ENCODE measurements at regions of chr3 and their contacts with region 1.

Region 1: GRCh38 chr3:154310840-154311239 is 13.4 kb downstream of the DHX36 start:
- DNase-seq: no peak
- H3K4me3 ChIP-seq: no peak overlapping the region
- H3K27ac ChIP-seq: no peak overlapping the region
- H3K4me1 ChIP-seq: no peaks in the 10 kb centered on the region
- CTCF ChIP-seq: no peak

Region 2: DNA sequence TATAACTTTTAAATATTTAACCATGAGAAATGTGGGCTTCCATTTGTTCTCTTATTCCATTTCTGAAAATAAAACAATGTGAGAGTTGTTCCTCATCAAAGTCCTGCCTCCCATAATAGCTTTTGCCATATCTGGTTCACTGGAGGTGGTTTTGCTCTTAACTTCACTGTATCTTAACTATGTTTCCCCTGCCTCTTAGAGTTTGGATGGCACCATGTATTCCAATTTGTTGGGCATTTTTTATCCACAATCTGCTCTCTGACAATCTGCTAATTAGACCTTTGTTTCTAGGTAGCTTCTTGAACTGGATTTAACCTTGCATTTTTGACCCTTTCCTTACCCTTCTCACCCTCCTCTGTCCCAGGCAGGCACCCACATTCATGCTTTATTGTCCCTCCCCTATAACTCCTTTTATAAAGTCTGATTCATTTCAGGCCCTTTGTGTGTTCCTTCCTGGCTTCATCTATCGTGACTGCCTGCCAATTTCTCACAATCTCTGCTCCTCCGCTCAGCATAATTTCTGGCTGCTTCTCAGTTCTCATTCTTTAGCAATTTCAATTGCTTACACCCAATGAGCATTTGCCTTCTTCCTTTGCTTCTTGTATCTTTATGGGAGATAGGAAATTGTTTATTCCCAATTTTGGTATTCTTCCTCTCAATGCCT is 333.8 kb before region 1 on chr3:
- CTCF ChIA-PET with region 1: no interaction called
- POLR2A ChIA-PET with region 1: no interaction called
- intact Hi-C with region 1: no loop called
- DNase-seq: no peak
- H3K4me3 ChIP-seq: no peak overlapping the region
- H3K27ac ChIP-seq: no peak overlapping the region
- H3K4me1 ChIP-seq: no peaks in the 10 kb centered on the region
- CTCF ChIP-seq: no peak

Region 3: DNA sequence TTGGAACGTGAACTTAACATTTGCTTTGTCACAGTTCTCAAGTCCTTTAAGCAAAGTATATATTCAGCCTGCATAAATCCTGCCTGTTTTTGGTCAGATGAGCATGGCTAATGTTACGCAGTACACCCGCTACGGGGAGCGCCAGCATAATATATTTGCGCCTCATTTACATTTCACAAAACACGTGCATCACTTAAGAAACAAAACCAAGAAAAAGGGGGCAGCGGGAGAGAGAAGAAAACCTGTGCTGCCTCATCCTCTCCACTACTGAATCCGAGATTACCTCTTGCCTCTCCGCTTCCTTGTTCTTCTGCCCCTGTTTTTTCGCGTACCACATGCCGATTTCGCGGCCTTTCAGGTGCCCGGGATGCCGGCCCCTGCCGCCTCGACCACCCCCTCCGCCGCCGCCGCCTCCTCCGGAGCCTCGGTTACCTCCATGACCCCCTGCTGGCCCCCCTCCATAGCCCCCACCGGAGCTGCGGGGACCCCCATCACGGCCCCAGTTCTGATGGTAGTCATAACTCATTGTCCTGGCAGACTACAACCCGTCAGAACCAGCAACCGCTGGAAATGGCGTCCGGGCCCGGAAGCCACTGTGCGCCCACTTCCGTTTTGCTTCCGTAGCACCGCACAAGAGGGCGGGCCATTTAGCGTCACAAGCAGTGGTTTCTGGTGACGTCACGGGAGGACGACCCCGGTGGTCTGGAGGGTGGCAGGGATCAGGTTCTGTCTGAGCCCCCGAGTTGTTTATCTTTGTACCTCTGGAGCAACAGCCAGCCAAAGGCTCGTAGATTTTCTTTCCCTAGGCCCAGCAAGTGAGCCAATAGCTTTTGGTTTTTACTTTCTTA is 13.3 kb after region 1 on chr3 and contains the start of gene DHX36:
- CTCF ChIA-PET with region 1: no interaction called
- POLR2A ChIA-PET with region 1: interaction called, 12 read pairs
- intact Hi-C with region 1: no loop called
- DNase-seq: peak; percentile 93
- H3K4me3 ChIP-seq: peak within 1 kb of the TSS; percentile 85
- H3K27ac ChIP-seq: peak within 1 kb of the TSS; percentile 75
- H3K4me1 ChIP-seq: peaks cover 46% of the 10 kb centered on the region
- CTCF ChIP-seq: no peak; the same call in 1 of the 2 replicates
- total RNA-seq, gene DHX36: 40.6 and 48.1 TPM in 2 replicates